Endothelial cell of umbilical vein (primary cell): ENCODE measurements at regions of chr3 and their contacts with region 1.

Region 1: GRCh38 chr3:188164248-188164687 is 10.3 kb downstream of the LPP start:
- DNase-seq: no peak
- H3K4me3 ChIP-seq: no peak overlapping the region
- H3K27ac ChIP-seq: no peak overlapping the region
- H3K4me1 ChIP-seq: peaks cover 6% of the 10 kb centered on the region
- H3K27me3 ChIP-seq: no peaks in the 10 kb centered on the region
- CTCF ChIP-seq: no peak
- POLR2A ChIP-seq: no peak

Region 2: GRCh38 chr3:186882881-186883685 is 1281.2 kb before region 1 on chr3:
- CTCF ChIA-PET with region 1: no interaction called
- POLR2A ChIA-PET with region 1: no interaction called
- dilution Hi-C with region 1: no loop called
- intact Hi-C with region 1: loop called (anchors 10 kb)
- DNase-seq: peak; percentile 78
- H3K4me3 ChIP-seq: no peak overlapping the region
- H3K27ac ChIP-seq: peak overlapping the region; percentile 71
- H3K4me1 ChIP-seq: peaks cover 16% of the 10 kb centered on the region
- H3K27me3 ChIP-seq: no peaks in the 10 kb centered on the region
- CTCF ChIP-seq: no peak
- POLR2A ChIP-seq: no peak

Region 3: DNA sequence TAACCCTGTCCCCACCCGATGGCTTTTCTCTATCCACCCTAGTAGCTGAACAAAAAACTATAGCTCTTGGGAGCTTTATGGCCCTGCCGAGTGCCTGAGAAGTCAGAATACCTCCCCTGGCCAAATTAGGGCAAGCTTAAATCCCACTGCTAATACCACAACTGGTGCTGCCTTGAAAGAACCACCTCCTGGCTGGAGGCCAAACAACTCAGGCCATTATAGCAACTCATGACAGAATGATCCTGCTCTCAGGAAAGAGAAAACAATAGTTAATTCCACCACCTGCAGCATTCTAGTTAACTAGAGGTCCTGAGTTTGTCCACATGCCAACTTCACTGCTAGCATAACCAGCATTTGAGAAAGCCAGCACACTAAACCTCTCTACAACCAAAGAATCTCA is 672.9 kb before region 1 on chr3:
- CTCF ChIA-PET with region 1: no interaction called
- POLR2A ChIA-PET with region 1: no interaction called
- dilution Hi-C with region 1: no loop called
- intact Hi-C with region 1: no loop called
- DNase-seq: no peak
- H3K4me3 ChIP-seq: no peak overlapping the region
- H3K27ac ChIP-seq: no peak overlapping the region
- H3K4me1 ChIP-seq: no peaks in the 10 kb centered on the region
- H3K27me3 ChIP-seq: no peaks in the 10 kb centered on the region
- CTCF ChIP-seq: no peak
- POLR2A ChIP-seq: no peak